Left ventricle myocardium superior (tissue), 1 donor: ENCODE measurements at regions of chr20 and their contacts with region 1.

Region 1: GRCh38 chr20:58870239-58871014 is 17.9 kb downstream of the GNAS start:
- DNase-seq: peak; percentile 70
- ATAC-seq: peak; percentile 86

Region 2: DNA sequence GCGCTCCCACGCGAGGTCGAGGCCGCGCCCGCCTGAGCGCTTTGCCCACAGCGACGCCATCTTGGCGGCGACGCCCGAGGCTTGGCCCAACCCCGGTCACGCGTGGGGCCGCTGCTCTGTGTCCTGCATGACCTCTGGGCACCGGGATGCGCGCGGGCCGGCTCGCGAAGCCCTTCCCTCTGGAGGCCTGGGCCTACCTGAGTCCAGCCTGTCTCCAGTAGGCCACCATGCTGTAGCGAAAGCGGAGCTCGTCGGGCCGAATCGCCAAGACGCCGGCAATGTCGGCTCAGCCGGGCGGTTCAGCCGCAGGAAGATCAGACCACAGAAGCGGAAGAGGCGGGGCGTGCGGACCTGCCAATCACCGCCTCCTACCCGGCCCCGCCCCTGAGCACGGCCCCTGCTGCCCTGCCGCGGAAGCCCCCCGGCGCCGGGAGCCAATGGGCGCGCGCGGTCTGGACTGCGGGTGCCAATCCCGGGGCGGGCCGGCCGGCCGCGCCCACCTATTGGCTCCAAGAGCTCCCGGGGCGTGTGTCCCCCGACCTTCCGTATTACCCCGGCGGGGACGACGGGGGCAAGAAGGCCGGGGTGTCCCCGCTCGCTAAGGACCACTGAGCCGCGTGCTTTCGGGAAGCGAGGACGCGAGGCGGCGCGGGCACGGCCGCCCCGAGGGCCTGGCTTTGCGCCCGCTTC is 161.7 kb after region 1 on chr20 and contains the start of gene ATP5F1E:
- intact Hi-C with region 1: no loop called
- DNase-seq: peak; percentile 99
- ATAC-seq: peak; percentile 100
- total RNA-seq, gene ATP5F1E: 128 TPM

Region 3: GRCh38 chr20:59082077-59082740 is 211.8 kb after region 1 on chr20:
- intact Hi-C with region 1: no loop called
- DNase-seq: no peak
- ATAC-seq: no peak

Region 4: GRCh38 chr20:59222253-59223181 is 352.1 kb after region 1 on chr20:
- intact Hi-C with region 1: loop called (anchors 5 kb)
- DNase-seq: peak; percentile 90
- ATAC-seq: peak; percentile 93

Region 5: GRCh38 chr20:59403261-59403961 is 533.0 kb after region 1 on chr20:
- intact Hi-C with region 1: loop called (anchors 10 kb)
- DNase-seq: peak; percentile 66
- ATAC-seq: peak; percentile 62